CD8-positive, alpha-beta T cell (primary cell): ENCODE measurements at regions of chr1 and their contacts with region 1.

Region 1: GRCh38 chr1:203267347-203267846 is 37.9 kb upstream of the BTG2 start:
- DNase-seq: peak; percentile 66 to 92 (median 82)
- ATAC-seq: peak; percentile 58
- H3K4me3 ChIP-seq: peak overlapping the region; percentile 67 to 76
- H3K4me3 Mint-ChIP-seq: peak overlapping the region; percentile 89
- H3K27ac ChIP-seq: peak overlapping the region; percentile 50 to 68
- H3K27ac Mint-ChIP-seq: peak overlapping the region; percentile 82
- H3K4me1 ChIP-seq: peaks cover 25% of the 10 kb centered on the region
- H3K4me1 Mint-ChIP-seq: peaks cover 20% of the 10 kb centered on the region
- H3K27me3 ChIP-seq: no peaks in the 10 kb centered on the region
- H3K27me3 Mint-ChIP-seq: no peaks in the 10 kb centered on the region
- CTCF ChIP-seq: peak; percentile 95

Region 2: GRCh38 chr1:202905331-202905730 is 362.1 kb before region 1 on chr1:
- CTCF ChIA-PET with region 1: no interaction called
- POLR2A ChIA-PET with region 1: no interaction called
- intact Hi-C with region 1: no loop called
- DNase-seq: no peak
- ATAC-seq: no peak
- H3K4me3 ChIP-seq: no peak overlapping the region
- H3K4me3 Mint-ChIP-seq: no peak overlapping the region
- H3K27ac ChIP-seq: no peak overlapping the region
- H3K27ac Mint-ChIP-seq: no peak overlapping the region
- H3K4me1 ChIP-seq: no peaks in the 10 kb centered on the region
- H3K4me1 Mint-ChIP-seq: no peaks in the 10 kb centered on the region
- H3K27me3 ChIP-seq: no peaks in the 10 kb centered on the region
- H3K27me3 Mint-ChIP-seq: no peaks in the 10 kb centered on the region
- CTCF ChIP-seq: no peak

Region 3: GRCh38 chr1:203216274-203217138 is 50.9 kb before region 1 on chr1:
- CTCF ChIA-PET with region 1: interaction called, 13 read pairs
- POLR2A ChIA-PET with region 1: no interaction called
- intact Hi-C with region 1: no loop called
- DNase-seq: peak; percentile 9 to 72 (median 55)
- ATAC-seq: peak; percentile 58
- H3K4me3 ChIP-seq: no peak overlapping the region
- H3K4me3 Mint-ChIP-seq: no peak overlapping the region
- H3K27ac ChIP-seq: no peak overlapping the region
- H3K27ac Mint-ChIP-seq: no peak overlapping the region
- H3K4me1 ChIP-seq: no peaks in the 10 kb centered on the region
- H3K4me1 Mint-ChIP-seq: no peaks in the 10 kb centered on the region
- H3K27me3 ChIP-seq: peaks cover 0 to 3% of the 10 kb centered on the region in 2 experiments
- H3K27me3 Mint-ChIP-seq: peaks cover 20% of the 10 kb centered on the region
- CTCF ChIP-seq: peak; percentile 71

Region 4: DNA sequence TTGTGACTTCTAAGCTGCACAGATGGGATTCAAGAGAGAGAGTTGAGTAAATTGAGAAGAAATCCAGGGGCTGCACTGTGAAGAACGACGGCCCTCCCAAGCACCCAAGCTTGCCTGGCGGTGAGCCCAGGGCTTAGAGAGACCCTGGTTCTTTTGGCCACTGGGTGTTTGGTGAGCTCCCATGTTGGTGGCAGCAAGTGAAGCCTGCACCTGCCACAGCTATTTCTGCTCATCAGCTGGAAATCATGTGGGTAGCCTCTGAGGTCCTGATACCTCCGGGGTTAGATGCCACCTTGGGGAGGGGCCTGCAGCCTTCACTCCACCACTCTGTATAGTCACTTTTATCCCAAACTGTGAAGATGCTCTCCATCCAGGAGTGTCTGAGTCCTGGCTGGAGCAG is 31.8 kb after region 1 on chr1:
- CTCF ChIA-PET with region 1: interaction called, 388 read pairs
- POLR2A ChIA-PET with region 1: interaction called, 3 read pairs
- intact Hi-C with region 1: no loop called
- DNase-seq: peak in 1 of 9 experiments; percentile 22
- ATAC-seq: no peak
- H3K4me3 ChIP-seq: no peak overlapping the region
- H3K4me3 Mint-ChIP-seq: no peak overlapping the region
- H3K27ac ChIP-seq: no peak overlapping the region
- H3K27ac Mint-ChIP-seq: no peak overlapping the region
- H3K4me1 ChIP-seq: peaks cover 40% of the 10 kb centered on the region
- H3K4me1 Mint-ChIP-seq: peaks cover 66% of the 10 kb centered on the region
- H3K27me3 ChIP-seq: no peaks in the 10 kb centered on the region
- H3K27me3 Mint-ChIP-seq: no peaks in the 10 kb centered on the region
- CTCF ChIP-seq: no peak

Region 5: DNA sequence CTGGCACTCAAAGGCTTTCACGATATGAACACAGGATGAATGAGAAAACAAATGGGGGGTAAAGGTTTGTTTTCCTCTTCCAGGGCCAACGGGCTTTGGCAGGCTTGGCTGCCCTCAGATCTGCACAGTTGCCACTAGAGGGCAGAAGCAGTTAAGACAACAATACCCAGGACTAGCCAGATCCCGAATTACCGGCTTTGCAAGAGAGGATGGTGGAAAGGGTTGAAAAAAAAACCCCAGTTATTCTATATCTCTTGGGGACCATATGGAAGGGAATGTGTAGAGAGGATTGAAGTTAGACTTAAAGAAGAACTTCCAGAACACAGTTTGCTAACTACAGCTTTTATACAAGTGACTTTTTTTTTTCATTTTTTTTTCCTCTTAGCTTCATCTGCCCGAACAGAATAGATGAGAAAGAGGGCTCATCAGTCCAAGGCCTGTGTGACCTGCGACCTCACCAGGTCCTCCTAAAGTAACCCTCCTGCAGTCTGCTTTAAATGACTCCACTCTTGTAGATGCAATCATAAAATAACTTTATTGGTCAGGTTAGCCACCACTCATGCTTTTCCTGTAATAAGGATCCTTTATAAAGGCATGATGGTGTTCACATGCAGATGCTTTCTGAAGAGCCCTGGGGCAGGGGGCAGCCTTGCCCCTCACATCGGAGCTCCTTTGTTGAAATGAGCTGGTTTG is 72.9 kb after region 1 on chr1:
- CTCF ChIA-PET with region 1: interaction called, 908 read pairs
- POLR2A ChIA-PET with region 1: interaction called, 12 read pairs
- intact Hi-C with region 1: no loop called
- DNase-seq: peak in 8 of 9 experiments; percentile 35 to 83 (median 60)
- ATAC-seq: peak; percentile 72
- H3K4me3 ChIP-seq: no peak overlapping the region
- H3K4me3 Mint-ChIP-seq: no peak overlapping the region
- H3K27ac ChIP-seq: no peak overlapping the region
- H3K27ac Mint-ChIP-seq: no peak overlapping the region
- H3K4me1 ChIP-seq: peaks cover 16% of the 10 kb centered on the region
- H3K4me1 Mint-ChIP-seq: peaks cover 25% of the 10 kb centered on the region
- H3K27me3 ChIP-seq: no peaks in the 10 kb centered on the region
- H3K27me3 Mint-ChIP-seq: peaks cover 8% of the 10 kb centered on the region
- CTCF ChIP-seq: peak; percentile 91

Region 6: GRCh38 chr1:203504397-203505250 is 237.2 kb after region 1 on chr1:
- CTCF ChIA-PET with region 1: interaction called, 24 read pairs
- POLR2A ChIA-PET with region 1: no interaction called
- intact Hi-C with region 1: loop called in 1 of 2 experiments (anchors 5 kb)
- DNase-seq: peak; percentile 34 to 86 (median 77)
- ATAC-seq: peak; percentile 66
- H3K4me3 ChIP-seq: no peak overlapping the region
- H3K4me3 Mint-ChIP-seq: no peak overlapping the region
- H3K27ac ChIP-seq: no peak overlapping the region
- H3K27ac Mint-ChIP-seq: no peak overlapping the region
- H3K4me1 ChIP-seq: no peaks in the 10 kb centered on the region
- H3K4me1 Mint-ChIP-seq: peaks cover 2% of the 10 kb centered on the region
- H3K27me3 ChIP-seq: peaks cover 0 to 6% of the 10 kb centered on the region in 2 experiments
- H3K27me3 Mint-ChIP-seq: peaks cover 3% of the 10 kb centered on the region
- CTCF ChIP-seq: peak; percentile 88